ENCODE measurements at regions of chr15 and their contacts with region 1.

Region 1: GRCh38 chr15:70097337-70098169 is at the start of gene TLE3:
- DNase-seq: peak; percentile 97 to 99 (median 99)
- H3K4me3 ChIP-seq: peak within 1 kb of the TSS; percentile 65
- H3K27ac ChIP-seq: peak within 1 kb of the TSS; percentile 87 to 98
- H3K4me1 ChIP-seq: peaks cover 29% of the 10 kb centered on the region
- H3K27me3 ChIP-seq: no peaks in the 10 kb centered on the region
- CTCF ChIP-seq: peak; percentile 37 to 58 (median 56)
- EP300 ChIP-seq: peak; percentile 59
- POLR2A ChIP-seq: peak; percentile 92
- total RNA-seq, gene TLE3: 53.9 to 70.8 (median 62.4) TPM

Region 2: DNA sequence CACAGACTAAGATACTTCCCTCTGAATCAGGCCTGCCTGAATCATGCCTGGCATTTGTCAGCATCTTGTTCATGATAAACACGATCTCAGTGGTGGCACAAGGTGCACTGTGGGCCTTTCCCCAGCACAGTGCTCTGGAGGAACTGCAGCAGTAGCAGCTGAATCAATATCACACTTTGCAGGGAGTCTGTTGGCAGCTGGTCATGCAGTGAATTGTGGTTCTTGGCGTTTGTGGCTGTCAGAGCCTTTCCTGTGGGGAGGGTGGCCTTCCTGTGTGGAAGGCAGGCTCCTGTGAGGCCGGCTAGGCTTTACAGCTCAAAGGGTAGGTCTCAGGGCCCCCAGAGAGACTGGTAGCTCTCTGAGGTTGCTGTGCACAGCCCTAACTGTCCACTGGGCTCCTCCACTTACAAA is 54.5 kb after region 1 on chr15:
- intact Hi-C with region 1: loop called in 1 of 4 experiments (anchors 5 kb)
- DNase-seq: no peak
- H3K4me3 ChIP-seq: no peak overlapping the region
- H3K27ac ChIP-seq: no peak overlapping the region
- H3K4me1 ChIP-seq: peaks cover 22% of the 10 kb centered on the region
- H3K27me3 ChIP-seq: no peaks in the 10 kb centered on the region
- CTCF ChIP-seq: no peak
- EP300 ChIP-seq: no peak
- POLR2A ChIP-seq: no peak

Region 3: DNA sequence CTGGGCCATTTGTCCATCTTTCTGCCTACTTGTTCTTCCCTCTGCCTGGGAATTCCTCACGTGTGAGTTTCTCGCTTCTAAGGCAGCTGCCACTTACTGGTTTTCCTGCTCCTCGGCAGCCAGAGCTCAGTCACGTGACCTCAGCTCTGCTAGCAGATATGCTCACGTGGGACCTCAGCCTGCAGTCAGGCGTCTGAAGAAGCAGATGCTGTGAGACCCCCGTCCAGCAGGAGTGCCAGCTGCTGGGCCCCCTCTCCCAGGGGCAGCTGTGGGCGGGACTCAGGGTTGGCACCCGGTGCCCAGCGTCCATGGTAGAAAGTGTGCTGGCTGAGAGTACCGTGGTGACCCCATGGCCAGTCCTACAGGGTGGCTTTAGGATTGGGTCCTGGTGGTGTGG is 161.5 kb after region 1 on chr15:
- intact Hi-C with region 1: loop called in 1 of 4 experiments (anchors 10 kb)
- DNase-seq: peak; percentile 59 to 69 (median 63)
- H3K4me3 ChIP-seq: no peak overlapping the region
- H3K27ac ChIP-seq: no peak overlapping the region
- H3K4me1 ChIP-seq: peaks cover 4% of the 10 kb centered on the region
- H3K27me3 ChIP-seq: no peaks in the 10 kb centered on the region
- CTCF ChIP-seq: no peak
- EP300 ChIP-seq: no peak
- POLR2A ChIP-seq: no peak

Region 4: DNA sequence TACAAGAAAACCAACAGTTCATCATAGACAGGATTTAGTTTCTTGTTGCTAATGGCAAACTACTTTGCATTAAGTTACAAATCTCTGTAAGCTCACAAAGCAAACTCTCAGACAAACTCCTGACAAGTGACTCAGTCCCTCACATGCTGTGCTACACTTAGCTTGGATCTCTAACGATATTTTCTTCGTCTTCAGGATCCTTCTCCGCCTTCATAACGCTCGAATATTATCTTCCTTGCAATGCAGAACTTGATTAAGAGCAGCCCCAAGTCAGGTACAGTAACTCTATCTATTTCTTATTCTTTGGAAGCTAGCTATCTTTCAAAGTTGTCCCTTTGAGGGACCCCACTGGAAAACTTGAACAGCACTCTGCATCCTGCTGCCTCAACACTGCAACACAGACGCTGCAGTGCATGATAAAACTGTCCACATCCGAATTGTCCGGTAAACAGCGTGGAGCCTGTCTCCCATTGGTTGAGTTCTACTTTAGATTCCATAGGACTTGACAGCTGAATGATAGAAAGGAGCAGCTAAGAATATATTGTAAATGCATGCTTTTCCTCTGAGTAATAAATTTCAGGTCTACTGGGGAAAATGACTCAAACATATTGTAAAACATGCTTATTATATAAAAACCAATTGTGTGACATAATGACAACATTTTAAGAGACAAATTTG is 604.5 kb after region 1 on chr15:
- intact Hi-C with region 1: no loop called
- DNase-seq: no peak
- H3K4me3 ChIP-seq: no peak overlapping the region
- H3K27ac ChIP-seq: peak overlapping the region in 1 of 2 donors; percentile 59
- H3K4me1 ChIP-seq: peaks cover 13% of the 10 kb centered on the region
- H3K27me3 ChIP-seq: no peaks in the 10 kb centered on the region
- CTCF ChIP-seq: no peak
- EP300 ChIP-seq: no peak
- POLR2A ChIP-seq: no peak

Measured in ovary (tissue), 10 donors.